ENCODE measurements at regions of chr17 and their contacts with region 1.

Region 1: DNA sequence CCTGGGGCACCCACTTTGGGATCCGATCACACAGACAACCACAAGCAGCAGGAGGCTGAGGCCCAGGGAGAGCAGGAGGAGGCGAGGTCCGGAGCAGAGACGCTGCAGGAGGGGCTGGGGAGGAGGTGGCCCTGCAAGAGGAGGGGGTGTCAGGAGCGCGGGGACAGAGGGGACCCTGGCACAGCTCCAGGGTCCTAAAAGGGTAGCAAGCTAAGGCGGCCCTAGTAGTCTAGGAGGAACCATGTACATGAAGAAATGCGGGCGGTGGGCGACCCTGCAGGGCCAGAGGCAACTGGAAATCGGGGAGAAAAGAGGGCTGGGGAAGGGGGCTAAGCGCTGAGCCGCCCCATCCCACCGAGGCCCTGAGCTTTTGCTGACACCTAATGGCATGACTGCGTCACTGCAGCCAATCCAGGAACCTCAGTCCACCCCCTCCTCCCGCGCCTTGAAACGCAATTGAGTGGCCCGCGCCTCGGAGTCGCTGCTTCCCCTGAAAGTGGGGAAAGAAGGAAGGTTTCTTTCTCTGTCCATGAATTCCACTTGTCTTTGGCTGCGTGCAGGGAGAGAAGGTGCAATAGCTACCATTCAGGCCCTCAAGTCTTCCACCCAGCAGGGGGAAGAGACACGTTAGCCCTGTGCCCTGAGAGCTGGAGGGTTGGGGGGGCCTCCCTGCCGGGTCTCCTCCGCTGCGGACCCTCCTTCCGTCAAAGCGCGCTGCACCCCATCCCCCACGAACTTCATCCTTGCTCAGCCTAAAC is 1.8 kb downstream of the ASGR1 start:
- DNase-seq: peak in 1 of 2 donors; percentile 31
- ATAC-seq: peak; percentile 74
- H3K4me3 ChIP-seq: peak overlapping the region; percentile 35 to 54 (median 44)
- H3K27ac ChIP-seq: no peak overlapping the region
- H3K4me1 ChIP-seq: peaks cover 8% of the 10 kb centered on the region in 2 donors
- H3K27me3 ChIP-seq: peaks cover 39 to 52% (median 45%) of the 10 kb centered on the region in 3 donors
- CTCF ChIP-seq: peak; percentile 32 to 86 (median 69)
- POLR2A ChIP-seq: no peak

Region 2: GRCh38 chr17:7045909-7046724 is 131.3 kb before region 1 on chr17:
- in situ Hi-C with region 1: no loop called
- intact Hi-C with region 1: loop called (anchors 5 kb)
- DNase-seq: no peak
- ATAC-seq: peak; percentile 35 to 57
- H3K4me3 ChIP-seq: peak overlapping the region; percentile 14 to 50 (median 30)
- H3K27ac ChIP-seq: peak overlapping the region in 1 of 4 donors; percentile 44
- H3K4me1 ChIP-seq: peaks cover 10 to 12% of the 10 kb centered on the region in 2 donors
- H3K27me3 ChIP-seq: peaks cover 21 to 30% (median 29%) of the 10 kb centered on the region in 3 donors
- CTCF ChIP-seq: peak; percentile 50 to 76 (median 74)
- POLR2A ChIP-seq: no peak

Region 3: GRCh38 chr17:7306911-7307686 is 129.7 kb after region 1 on chr17 and contains the start of gene EIF5A:
- in situ Hi-C with region 1: no loop called
- intact Hi-C with region 1: no loop called
- DNase-seq: peak; percentile 100
- ATAC-seq: peak; percentile 82 to 84
- H3K4me3 ChIP-seq: peak within 1 kb of the TSS; percentile 79 to 98 (median 84)
- H3K27ac ChIP-seq: peak within 1 kb of the TSS; percentile 93 to 99 (median 98)
- H3K4me1 ChIP-seq: peaks cover 29 to 31% of the 10 kb centered on the region in 2 donors
- H3K27me3 ChIP-seq: no peaks in the 10 kb centered on the region
- CTCF ChIP-seq: no peak
- POLR2A ChIP-seq: peak; percentile 95 to 96
- total RNA-seq, gene EIF5A: 115 to 384 (median 273) TPM

Measured in gastrocnemius medialis (tissue), 4 donors.